PC-9 (cell line): ENCODE measurements at regions of chr9 and their contacts with region 1.

Region 1: DNA sequence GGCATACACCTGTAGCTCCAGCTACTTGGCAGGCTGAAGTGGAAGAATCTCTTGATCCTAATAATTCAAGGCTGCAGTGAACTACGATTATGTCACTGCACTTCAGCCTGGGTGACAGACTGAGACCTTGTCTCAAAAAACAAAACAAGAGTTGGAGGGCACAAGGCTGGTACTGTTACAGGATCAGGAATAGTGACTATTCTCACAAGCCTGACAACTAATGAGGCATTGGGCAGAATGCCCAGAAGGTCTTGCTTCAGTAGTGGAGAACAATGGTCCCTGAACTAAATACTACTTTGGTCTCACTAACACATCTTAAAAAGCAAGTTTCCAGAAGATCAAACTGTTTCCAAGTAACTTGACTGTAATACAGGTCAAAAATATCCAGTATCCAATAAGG is 182.9 kb upstream of the RFX3 start:
- DNase-seq: peak; percentile 42 to 49
- H3K4me3 ChIP-seq: no peak overlapping the region
- H3K27ac ChIP-seq: no peak overlapping the region
- H3K4me1 ChIP-seq: no peaks in the 10 kb centered on the region
- H3K27me3 ChIP-seq: no peaks in the 10 kb centered on the region
- CTCF ChIP-seq: no peak

Region 2: DNA sequence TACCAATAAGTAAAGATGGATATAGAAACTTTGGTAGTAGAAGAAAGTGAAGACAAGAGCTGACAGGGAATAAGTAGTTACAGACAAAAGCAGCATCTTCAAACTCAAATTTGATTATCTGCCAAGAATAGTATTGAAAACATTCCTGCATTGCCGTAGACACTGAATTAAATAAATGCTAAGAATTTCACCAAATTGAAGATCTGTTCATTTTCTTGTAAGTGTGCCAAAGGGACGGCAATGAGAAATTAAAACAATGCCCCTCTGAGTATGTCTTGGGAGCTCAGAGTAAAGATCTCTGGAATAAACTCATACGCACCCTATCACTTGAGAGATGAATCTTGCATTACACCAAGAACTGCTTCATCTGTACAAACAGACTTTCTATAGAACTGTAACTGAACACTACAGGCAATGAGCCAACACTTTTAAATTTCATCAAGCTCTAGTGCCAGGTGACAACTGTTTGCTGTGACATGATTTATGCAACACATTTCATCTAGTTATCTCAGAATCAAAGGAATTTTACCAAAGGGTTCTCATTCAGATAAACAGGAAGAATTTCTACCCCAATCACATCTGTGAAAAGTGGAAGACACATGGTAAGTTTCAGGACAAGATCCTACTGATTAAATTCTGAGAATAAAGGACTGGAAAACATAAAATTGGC is 249.8 kb before region 1 on chr9:
- CTCF ChIA-PET with region 1: interaction called, 10 read pairs
- POLR2A ChIA-PET with region 1: no interaction called
- intact Hi-C with region 1: no loop called
- DNase-seq: no peak
- H3K4me3 ChIP-seq: no peak overlapping the region
- H3K27ac ChIP-seq: no peak overlapping the region
- H3K4me1 ChIP-seq: no peaks in the 10 kb centered on the region
- H3K27me3 ChIP-seq: no peaks in the 10 kb centered on the region
- CTCF ChIP-seq: no peak

Region 3: GRCh38 chr9:3662671-3663070 is 46.1 kb before region 1 on chr9:
- CTCF ChIA-PET with region 1: no interaction called
- POLR2A ChIA-PET with region 1: interaction called, 16 read pairs
- intact Hi-C with region 1: no loop called
- DNase-seq: no peak
- H3K4me3 ChIP-seq: no peak overlapping the region
- H3K27ac ChIP-seq: no peak overlapping the region
- H3K4me1 ChIP-seq: no peaks in the 10 kb centered on the region
- H3K27me3 ChIP-seq: no peaks in the 10 kb centered on the region
- CTCF ChIP-seq: no peak

Region 4: GRCh38 chr9:3962971-3963642 is 254.4 kb after region 1 on chr9:
- CTCF ChIA-PET with region 1: no interaction called
- POLR2A ChIA-PET with region 1: no interaction called
- intact Hi-C with region 1: no loop called
- DNase-seq: no peak
- H3K4me3 ChIP-seq: no peak overlapping the region
- H3K27ac ChIP-seq: no peak overlapping the region
- H3K4me1 ChIP-seq: peaks cover 16% of the 10 kb centered on the region
- H3K27me3 ChIP-seq: no peaks in the 10 kb centered on the region
- CTCF ChIP-seq: no peak